Activated B cell treated with CpG ODN at 0.5 μM for 24 hours (primary cell): ENCODE measurements at regions of chr12 and their contacts with region 1.

Region 1: GRCh38 chr12:10130042-10130441 is at the start of gene CLEC7A:
- DNase-seq: no peak
- ATAC-seq: peak; percentile 86
- H3K4me3 Mint-ChIP-seq: no peak within 1 kb of the TSS
- H3K27ac Mint-ChIP-seq: no peak within 1 kb of the TSS
- H3K4me1 Mint-ChIP-seq: peaks cover 22% of the 10 kb centered on the region
- H3K27me3 Mint-ChIP-seq: peaks cover 46% of the 10 kb centered on the region
- CTCF ChIP-seq: no peak
- total RNA-seq, gene CLEC7A: 0.09 and 0.10 TPM in 2 replicates

Region 2: DNA sequence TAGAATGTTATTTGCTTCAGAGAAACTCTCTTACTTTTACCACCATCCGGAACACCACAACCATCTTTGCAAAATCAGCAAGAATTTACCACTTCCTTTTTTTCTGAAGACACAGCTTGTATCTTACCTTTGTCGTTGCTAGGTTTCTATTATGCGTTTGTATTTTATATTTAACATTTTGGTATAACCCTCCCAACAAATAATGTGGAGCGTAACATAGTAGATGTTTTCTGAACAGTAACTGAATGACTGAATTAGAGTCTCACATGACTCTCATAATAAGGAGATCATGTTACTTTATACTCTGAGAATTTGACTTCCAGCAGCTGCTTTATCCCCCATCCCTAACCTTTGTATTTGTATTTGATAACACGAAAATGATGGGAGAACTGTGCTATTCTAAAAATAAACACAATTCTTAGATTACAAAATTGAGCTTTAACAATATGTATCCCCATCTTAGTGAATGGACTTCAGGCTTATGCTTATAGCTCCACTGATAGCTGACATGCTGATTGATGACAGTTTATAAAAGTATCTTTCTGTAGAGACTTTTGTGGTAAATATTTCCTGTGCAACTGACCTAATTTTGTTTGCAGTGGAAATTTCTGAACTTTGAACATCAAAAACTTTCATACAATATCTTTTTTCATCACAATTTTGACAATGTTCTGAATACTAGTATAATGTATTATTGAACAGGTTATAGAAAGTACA is 514.5 kb before region 1 on chr12:
- CTCF ChIA-PET with region 1: no interaction called
- POLR2A ChIA-PET with region 1: no interaction called
- intact Hi-C with region 1: loop called (anchors 10 kb)
- DNase-seq: no peak
- ATAC-seq: peak; percentile 78
- H3K4me3 Mint-ChIP-seq: peak overlapping the region; percentile 36
- H3K27ac Mint-ChIP-seq: peak overlapping the region; percentile 80
- H3K4me1 Mint-ChIP-seq: peaks cover 60% of the 10 kb centered on the region
- H3K27me3 Mint-ChIP-seq: no peaks in the 10 kb centered on the region
- CTCF ChIP-seq: no peak

Region 3: GRCh38 chr12:10101042-10101579 is 28.9 kb before region 1 on chr12:
- CTCF ChIA-PET with region 1: no interaction called
- POLR2A ChIA-PET with region 1: no interaction called
- intact Hi-C with region 1: no loop called
- DNase-seq: no peak
- ATAC-seq: no peak
- H3K4me3 Mint-ChIP-seq: no peak overlapping the region
- H3K27ac Mint-ChIP-seq: no peak overlapping the region
- H3K4me1 Mint-ChIP-seq: no peaks in the 10 kb centered on the region
- H3K27me3 Mint-ChIP-seq: peaks cover 36% of the 10 kb centered on the region
- CTCF ChIP-seq: no peak

Region 4: DNA sequence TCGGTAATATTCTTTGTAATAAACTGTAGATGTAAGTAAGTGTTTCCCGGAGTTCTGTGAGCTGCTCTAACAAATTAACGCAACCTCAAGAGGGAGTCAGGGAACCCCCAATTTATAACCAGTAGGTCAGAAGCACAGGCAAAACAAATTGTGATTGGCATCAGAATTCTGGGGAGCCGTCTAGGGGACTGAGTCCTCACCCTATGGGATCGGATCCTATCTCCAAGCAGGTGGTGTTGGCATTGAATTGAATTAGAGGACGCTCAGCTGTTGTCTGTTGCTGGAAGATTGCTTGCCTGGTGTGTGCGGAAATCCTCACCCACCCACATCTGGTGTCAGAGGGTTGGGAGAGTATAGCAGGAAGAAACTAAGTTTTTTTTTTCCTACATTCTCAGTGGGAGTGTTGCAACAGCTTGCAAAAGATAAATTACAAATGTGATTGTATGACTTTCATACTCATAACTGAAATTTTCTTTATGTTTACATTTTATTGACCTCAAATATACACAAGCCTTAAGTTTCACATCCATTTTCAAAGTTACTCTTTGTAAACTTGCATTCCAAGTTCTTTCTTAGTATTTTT is 54.3 kb after region 1 on chr12:
- CTCF ChIA-PET with region 1: no interaction called
- POLR2A ChIA-PET with region 1: no interaction called
- intact Hi-C with region 1: no loop called
- DNase-seq: no peak
- ATAC-seq: no peak
- H3K4me3 Mint-ChIP-seq: no peak overlapping the region
- H3K27ac Mint-ChIP-seq: no peak overlapping the region
- H3K4me1 Mint-ChIP-seq: peaks cover 4% of the 10 kb centered on the region
- H3K27me3 Mint-ChIP-seq: peaks cover 37% of the 10 kb centered on the region
- CTCF ChIP-seq: no peak